CD4-positive, alpha-beta memory T cell (primary cell): ENCODE measurements at regions of chr4 and their contacts with region 1.

Region 1: GRCh38 chr4:56977321-56978012 is at the start of gene NOA1:
- DNase-seq: peak; percentile 98 to 99 (median 99)
- H3K4me3 ChIP-seq: peak within 1 kb of the TSS; percentile 96 to 100
- H3K4me3 Mint-ChIP-seq: peak within 1 kb of the TSS; percentile 96 to 100 (median 99)
- H3K27ac ChIP-seq: peak within 1 kb of the TSS; percentile 85
- H3K27ac Mint-ChIP-seq: peak within 1 kb of the TSS; percentile 93 to 99 (median 98)
- H3K4me1 ChIP-seq: peaks cover 56% of the 10 kb centered on the region
- H3K4me1 Mint-ChIP-seq: peaks cover 28 to 79% (median 46%) of the 10 kb centered on the region in 4 donors
- H3K27me3 ChIP-seq: no peaks in the 10 kb centered on the region
- H3K27me3 Mint-ChIP-seq: no peaks in the 10 kb centered on the region
- total RNA-seq, gene NOA1: 20.1 to 20.4 TPM

Region 2: DNA sequence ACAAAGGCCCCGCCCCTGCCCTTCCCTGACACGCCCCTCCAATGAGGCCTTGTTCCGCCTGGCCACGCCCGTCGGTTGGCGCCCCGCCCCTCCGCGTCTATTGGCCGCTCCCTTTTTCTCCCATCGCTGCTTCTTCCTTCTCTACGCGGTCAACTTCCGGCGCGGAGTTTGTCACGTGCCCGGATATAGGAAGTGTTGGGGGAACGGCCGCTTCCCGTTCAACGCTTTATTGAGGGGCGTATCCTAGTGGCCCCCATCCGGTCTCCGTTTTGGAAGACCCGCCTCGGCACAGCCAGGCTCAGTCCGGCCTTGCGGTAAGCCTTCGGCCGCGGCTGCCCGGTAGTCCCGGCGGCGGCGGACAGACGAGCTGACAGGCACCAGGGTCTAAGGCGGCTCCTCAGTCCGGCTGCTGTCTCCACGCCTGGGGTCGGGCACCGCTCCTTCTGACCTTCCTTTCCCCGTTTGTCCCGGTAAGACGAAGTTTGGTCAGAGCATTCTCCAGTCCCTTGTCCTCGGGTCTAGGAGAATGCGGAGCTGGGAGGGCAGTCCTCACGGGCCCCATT is 1123.9 kb before region 1 on chr4 and contains the start of gene EXOC1:
- CTCF ChIA-PET with region 1: no interaction called
- POLR2A ChIA-PET with region 1: interaction called, 4 read pairs
- intact Hi-C with region 1: loop called (anchors 5 kb)
- DNase-seq: peak; percentile 93 to 96 (median 93)
- H3K4me3 ChIP-seq: peak within 1 kb of the TSS; percentile 83 to 97
- H3K4me3 Mint-ChIP-seq: peak within 1 kb of the TSS in 4 of 8 donors; percentile 40 to 67 (median 46)
- H3K27ac ChIP-seq: peak within 1 kb of the TSS; percentile 81
- H3K27ac Mint-ChIP-seq: peak within 1 kb of the TSS in 5 of 7 donors; percentile 36 to 96 (median 84)
- H3K4me1 ChIP-seq: peaks cover 44% of the 10 kb centered on the region
- H3K4me1 Mint-ChIP-seq: peaks cover 30 to 47% (median 38%) of the 10 kb centered on the region in 4 donors
- H3K27me3 ChIP-seq: no peaks in the 10 kb centered on the region
- H3K27me3 Mint-ChIP-seq: no peaks in the 10 kb centered on the region
- total RNA-seq, gene EXOC1: 41.9 to 50.7 TPM

Region 3: DNA sequence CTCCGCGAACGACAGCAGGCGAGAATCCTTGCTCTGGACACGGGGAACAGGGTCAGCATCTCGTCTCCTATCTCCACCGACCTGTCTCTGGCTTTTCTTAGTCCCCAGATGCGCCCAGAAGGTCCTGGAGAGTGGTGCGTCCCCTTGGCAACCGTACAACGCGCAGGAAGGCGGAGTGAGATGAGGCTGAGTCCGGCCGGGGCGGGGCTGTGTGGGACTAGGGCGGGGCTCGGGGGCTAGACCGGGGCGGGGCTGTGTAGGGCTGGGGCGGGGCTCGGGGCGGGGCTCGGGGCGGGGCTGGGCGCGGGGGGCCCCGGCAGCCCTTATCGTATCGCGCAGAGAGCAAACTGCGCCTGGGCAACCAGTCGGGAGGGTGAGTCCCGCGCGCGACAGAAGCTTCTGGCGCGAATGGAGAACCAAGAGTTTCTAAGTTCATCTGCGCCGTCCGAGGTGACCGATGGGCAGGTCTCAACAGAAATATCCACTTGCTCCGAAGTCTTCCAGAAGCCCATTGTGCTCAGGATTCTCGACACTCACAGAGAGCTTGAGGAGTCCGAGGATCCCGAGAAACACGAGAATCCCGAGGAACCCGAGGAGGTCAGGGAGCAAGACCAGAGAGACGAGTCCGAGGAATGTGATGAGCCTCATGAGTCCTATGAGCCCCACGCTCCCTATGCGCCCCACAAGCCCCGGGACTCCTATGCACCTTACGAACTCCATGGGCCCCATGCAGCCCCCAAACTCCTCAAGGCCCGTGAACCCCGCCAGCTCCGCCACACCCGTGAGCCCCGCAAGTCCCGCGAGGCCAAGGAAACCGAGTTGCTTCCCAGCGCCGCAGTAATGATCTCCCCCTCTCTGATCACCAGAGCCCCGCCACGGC is 447.0 kb before region 1 on chr4:
- CTCF ChIA-PET with region 1: no interaction called
- POLR2A ChIA-PET with region 1: no interaction called
- intact Hi-C with region 1: loop called (anchors 1 kb)
- DNase-seq: peak; percentile 60 to 80 (median 63)
- H3K4me3 ChIP-seq: peak overlapping the region; percentile 48 to 57
- H3K4me3 Mint-ChIP-seq: no peak overlapping the region
- H3K27ac ChIP-seq: no peak overlapping the region
- H3K27ac Mint-ChIP-seq: peak overlapping the region in 6 of 7 donors; percentile 14 to 69 (median 40)
- H3K4me1 ChIP-seq: peaks cover 11% of the 10 kb centered on the region
- H3K4me1 Mint-ChIP-seq: no peaks in the 10 kb centered on the region
- H3K27me3 ChIP-seq: no peaks in the 10 kb centered on the region
- H3K27me3 Mint-ChIP-seq: peaks cover 7 to 9% of the 10 kb centered on the region in 2 donors

Region 4: GRCh38 chr4:56930638-56931037 is 46.8 kb before region 1 on chr4:
- CTCF ChIA-PET with region 1: no interaction called
- POLR2A ChIA-PET with region 1: no interaction called
- intact Hi-C with region 1: no loop called
- DNase-seq: no peak
- H3K4me3 ChIP-seq: no peak overlapping the region
- H3K4me3 Mint-ChIP-seq: no peak overlapping the region
- H3K27ac ChIP-seq: no peak overlapping the region
- H3K27ac Mint-ChIP-seq: peak overlapping the region in 1 of 7 donors; percentile 57
- H3K4me1 ChIP-seq: no peaks in the 10 kb centered on the region
- H3K4me1 Mint-ChIP-seq: peaks cover 23 to 39% (median 31%) of the 10 kb centered on the region in 4 donors
- H3K27me3 ChIP-seq: no peaks in the 10 kb centered on the region
- H3K27me3 Mint-ChIP-seq: no peaks in the 10 kb centered on the region

Region 5: DNA sequence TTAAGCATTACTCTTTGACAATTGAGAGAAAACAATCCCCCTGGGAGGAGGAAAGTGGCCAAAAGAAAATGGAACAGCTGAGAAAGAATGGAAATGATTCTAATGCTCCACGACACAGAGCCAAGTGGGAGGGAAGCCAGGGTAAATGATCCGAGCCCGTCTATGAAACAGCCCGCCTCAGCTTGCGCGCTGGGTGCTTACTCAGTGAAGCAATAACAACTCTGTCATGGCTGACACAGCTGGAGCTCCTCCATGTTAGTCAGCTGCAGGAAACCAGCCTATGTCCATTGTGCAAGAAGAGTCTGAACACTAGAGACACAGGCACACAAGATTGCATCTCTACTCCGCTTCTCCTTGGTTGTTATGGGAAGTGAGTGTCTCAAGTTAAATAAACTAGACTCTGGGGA is 19.4 kb before region 1 on chr4:
- CTCF ChIA-PET with region 1: interaction called, 24 read pairs
- POLR2A ChIA-PET with region 1: interaction called, 4 read pairs
- intact Hi-C with region 1: no loop called
- DNase-seq: no peak
- H3K4me3 ChIP-seq: no peak overlapping the region
- H3K4me3 Mint-ChIP-seq: no peak overlapping the region
- H3K27ac ChIP-seq: no peak overlapping the region
- H3K27ac Mint-ChIP-seq: peak overlapping the region in 1 of 7 donors; percentile 10
- H3K4me1 ChIP-seq: no peaks in the 10 kb centered on the region
- H3K4me1 Mint-ChIP-seq: no peaks in the 10 kb centered on the region
- H3K27me3 ChIP-seq: no peaks in the 10 kb centered on the region
- H3K27me3 Mint-ChIP-seq: no peaks in the 10 kb centered on the region

Region 6: GRCh38 chr4:57163530-57164459 is 186.3 kb after region 1 on chr4:
- CTCF ChIA-PET with region 1: no interaction called
- POLR2A ChIA-PET with region 1: no interaction called
- intact Hi-C with region 1: loop called (anchors 2 kb)
- DNase-seq: peak; percentile 41 to 61 (median 56)
- H3K4me3 ChIP-seq: peak overlapping the region; percentile 76 to 87
- H3K4me3 Mint-ChIP-seq: peak overlapping the region; percentile 77 to 93 (median 90)
- H3K27ac ChIP-seq: no peak overlapping the region
- H3K27ac Mint-ChIP-seq: peak overlapping the region in 4 of 7 donors; percentile 15 to 74 (median 52)
- H3K4me1 ChIP-seq: peaks cover 4% of the 10 kb centered on the region
- H3K4me1 Mint-ChIP-seq: peaks cover 6 to 16% (median 9%) of the 10 kb centered on the region in 4 donors
- H3K27me3 ChIP-seq: no peaks in the 10 kb centered on the region
- H3K27me3 Mint-ChIP-seq: peaks cover 16 to 18% of the 10 kb centered on the region in 2 donors